GM12878 (cell line): ENCODE measurements at regions of chr4 and their contacts with region 1.

Region 1: DNA sequence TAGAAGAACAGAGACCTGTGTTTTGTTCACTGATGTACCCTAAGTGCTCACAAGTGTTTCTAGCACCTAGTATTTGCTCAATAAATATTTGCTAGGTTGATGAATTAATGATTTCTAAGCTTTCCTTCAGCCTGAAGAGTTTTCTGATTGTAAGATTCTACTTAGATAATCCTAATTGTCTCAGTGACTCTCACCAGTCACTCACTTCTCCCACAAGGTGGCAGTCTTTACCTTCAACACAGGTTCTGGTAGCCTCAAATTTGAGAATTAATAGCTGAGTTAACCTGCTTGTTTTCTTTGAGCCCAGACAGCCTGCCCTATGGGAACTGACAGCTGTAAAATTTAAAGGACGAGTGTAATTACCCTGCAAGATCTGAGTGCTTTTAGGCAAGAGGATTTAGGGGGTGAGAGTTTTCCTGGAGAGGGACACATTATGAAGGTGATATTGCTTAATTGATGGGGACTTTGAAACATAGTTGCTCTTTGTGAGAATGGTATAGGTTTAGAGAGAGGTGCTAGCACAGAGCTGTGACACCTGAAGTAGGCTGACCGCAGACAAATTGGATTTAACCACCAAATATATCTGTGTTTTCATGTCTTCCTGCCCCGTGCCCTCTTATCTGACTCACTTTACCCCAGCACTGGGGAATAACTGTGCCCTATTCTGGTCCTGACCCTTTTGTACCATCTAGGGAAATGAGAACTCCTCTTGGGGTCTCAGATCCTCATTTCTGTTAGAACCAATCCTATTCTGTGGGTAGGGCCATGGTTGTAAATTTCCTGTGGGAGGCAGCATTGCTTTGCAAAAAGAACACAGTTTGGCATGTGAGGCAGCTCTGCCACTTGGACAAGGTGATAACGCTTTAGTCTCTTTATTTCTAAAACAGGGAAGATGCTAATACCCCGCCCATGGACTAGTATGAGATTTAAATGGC is 27.7 kb downstream of the CD38 start:
- DNase-seq: peak; percentile 48
- ATAC-seq: peak; percentile 76
- H3K4me3 ChIP-seq: no peak overlapping the region
- H3K27ac ChIP-seq: no peak overlapping the region
- H3K4me1 ChIP-seq: peaks cover 12% of the 10 kb centered on the region; the same call in 1 of the 2 replicates
- H3K27me3 ChIP-seq: no peaks in the 10 kb centered on the region
- CTCF ChIP-seq: peak; percentile 60 to 75 (median 69)
- EP300 ChIP-seq: peak in 1 of 2 experiments; percentile 40; a peak in 1 of 4 replicates
- POLR2A ChIP-seq: no peak
- RAD21 ChIP-seq: peak; percentile 84

Region 2: GRCh38 chr4:15738877-15739276 is 67.0 kb before region 1 on chr4:
- CTCF ChIA-PET with region 1: interaction called, 31 read pairs
- POLR2A ChIA-PET with region 1: no interaction called
- RAD21 ChIA-PET with region 1: interaction called, 39 read pairs
- SMC1A ChIA-PET with region 1: interaction called, 25 read pairs
- in situ Hi-C with region 1: no loop called
- intact Hi-C with region 1: no loop called
- DNase-seq: no peak
- ATAC-seq: no peak
- H3K4me3 ChIP-seq: no peak overlapping the region
- H3K27ac ChIP-seq: no peak overlapping the region
- H3K4me1 ChIP-seq: no peaks in the 10 kb centered on the region
- H3K27me3 ChIP-seq: no peaks in the 10 kb centered on the region; a peak in 1 of 4 replicates
- CTCF ChIP-seq: no peak
- EP300 ChIP-seq: no peak
- POLR2A ChIP-seq: no peak
- RAD21 ChIP-seq: no peak

Region 3: GRCh38 chr4:15784959-15785634 is 20.8 kb before region 1 on chr4:
- CTCF ChIA-PET with region 1: interaction called, 96 read pairs
- POLR2A ChIA-PET with region 1: interaction called, 4 read pairs
- RAD21 ChIA-PET with region 1: interaction called, 27 read pairs
- SMC1A ChIA-PET with region 1: interaction called, 27 read pairs
- in situ Hi-C with region 1: no loop called
- intact Hi-C with region 1: no loop called
- DNase-seq: no peak
- ATAC-seq: peak; percentile 66
- H3K4me3 ChIP-seq: no peak overlapping the region
- H3K27ac ChIP-seq: no peak overlapping the region
- H3K4me1 ChIP-seq: peaks cover 43% of the 10 kb centered on the region
- H3K27me3 ChIP-seq: no peaks in the 10 kb centered on the region
- CTCF ChIP-seq: no peak
- EP300 ChIP-seq: peak; percentile 62 to 81; a peak in 3 of 4 replicates
- POLR2A ChIP-seq: no peak
- RAD21 ChIP-seq: no peak

Region 4: DNA sequence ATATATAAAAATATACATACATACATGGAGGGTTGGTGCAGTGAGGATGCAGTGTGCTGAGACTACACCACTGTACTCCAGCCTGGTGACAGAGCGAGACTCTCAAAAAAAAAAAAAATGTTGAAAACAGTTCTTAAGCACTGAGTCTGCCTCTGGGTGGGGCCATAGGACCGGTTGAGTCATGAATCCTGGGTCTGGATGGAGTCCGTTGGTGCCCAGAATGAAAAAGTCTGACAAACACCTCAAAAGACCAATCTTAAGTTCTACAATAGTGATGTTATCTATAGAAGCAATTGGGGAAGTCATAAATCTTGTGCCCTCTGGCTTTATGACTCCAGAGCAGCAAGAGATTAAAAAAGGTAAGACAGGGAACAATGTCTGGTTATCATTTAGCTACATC is 62.3 kb after region 1 on chr4:
- CTCF ChIA-PET with region 1: interaction called, 15 read pairs
- POLR2A ChIA-PET with region 1: no interaction called
- RAD21 ChIA-PET with region 1: interaction called, 4 read pairs
- SMC1A ChIA-PET with region 1: interaction called, 5 read pairs
- in situ Hi-C with region 1: no loop called
- intact Hi-C with region 1: no loop called
- DNase-seq: no peak
- ATAC-seq: peak; percentile 39
- H3K4me3 ChIP-seq: no peak overlapping the region
- H3K27ac ChIP-seq: no peak overlapping the region
- H3K4me1 ChIP-seq: no peaks in the 10 kb centered on the region
- H3K27me3 ChIP-seq: no peaks in the 10 kb centered on the region
- CTCF ChIP-seq: no peak
- EP300 ChIP-seq: no peak
- POLR2A ChIP-seq: no peak
- RAD21 ChIP-seq: no peak

Region 5: DNA sequence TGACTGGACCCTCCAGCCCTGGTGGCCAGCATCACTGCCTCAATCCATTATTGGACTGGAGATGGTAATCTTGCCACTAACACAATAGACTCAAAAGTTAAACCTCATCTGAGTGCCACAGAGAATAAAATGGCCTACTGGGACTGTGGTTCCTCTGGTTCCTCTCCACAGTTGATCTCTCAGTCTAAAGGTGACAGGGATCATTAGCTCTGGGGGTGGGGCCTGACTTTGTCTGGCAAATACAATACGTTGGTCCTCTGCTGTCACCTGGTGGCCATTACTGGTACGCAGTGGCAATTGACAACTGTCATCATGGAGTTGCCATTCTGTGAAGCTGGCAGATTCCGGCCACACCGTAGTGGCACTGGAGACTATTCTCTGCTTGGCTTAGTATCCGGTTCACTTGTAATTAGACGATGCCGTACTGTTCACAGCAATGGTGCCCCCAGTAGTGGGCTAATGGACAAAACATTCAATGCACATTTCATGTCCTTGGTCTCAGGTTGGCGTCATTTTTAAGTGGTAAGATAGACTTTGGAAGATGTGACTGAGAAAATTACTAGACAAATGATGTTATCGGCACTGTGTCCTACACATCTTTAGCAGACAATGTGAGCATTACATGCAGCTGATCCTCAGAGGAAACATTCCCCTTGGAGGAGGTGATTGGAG is 150.5 kb after region 1 on chr4:
- CTCF ChIA-PET with region 1: interaction called, 161 read pairs
- POLR2A ChIA-PET with region 1: no interaction called
- RAD21 ChIA-PET with region 1: interaction called, 77 read pairs
- SMC1A ChIA-PET with region 1: interaction called, 80 read pairs
- in situ Hi-C with region 1: loop called (anchors 5 kb)
- intact Hi-C with region 1: loop called (anchors 1 kb)
- DNase-seq: peak; percentile 55
- ATAC-seq: peak; percentile 90
- H3K4me3 ChIP-seq: no peak overlapping the region
- H3K27ac ChIP-seq: no peak overlapping the region
- H3K4me1 ChIP-seq: 0 out of 2 replicates have a peak, but pooled peaks cover 3% of the 10 kb centered on the region
- H3K27me3 ChIP-seq: no peaks in the 10 kb centered on the region
- CTCF ChIP-seq: peak; percentile 86 to 98 (median 92)
- EP300 ChIP-seq: no peak
- POLR2A ChIP-seq: no peak
- RAD21 ChIP-seq: peak; percentile 95

Region 6: DNA sequence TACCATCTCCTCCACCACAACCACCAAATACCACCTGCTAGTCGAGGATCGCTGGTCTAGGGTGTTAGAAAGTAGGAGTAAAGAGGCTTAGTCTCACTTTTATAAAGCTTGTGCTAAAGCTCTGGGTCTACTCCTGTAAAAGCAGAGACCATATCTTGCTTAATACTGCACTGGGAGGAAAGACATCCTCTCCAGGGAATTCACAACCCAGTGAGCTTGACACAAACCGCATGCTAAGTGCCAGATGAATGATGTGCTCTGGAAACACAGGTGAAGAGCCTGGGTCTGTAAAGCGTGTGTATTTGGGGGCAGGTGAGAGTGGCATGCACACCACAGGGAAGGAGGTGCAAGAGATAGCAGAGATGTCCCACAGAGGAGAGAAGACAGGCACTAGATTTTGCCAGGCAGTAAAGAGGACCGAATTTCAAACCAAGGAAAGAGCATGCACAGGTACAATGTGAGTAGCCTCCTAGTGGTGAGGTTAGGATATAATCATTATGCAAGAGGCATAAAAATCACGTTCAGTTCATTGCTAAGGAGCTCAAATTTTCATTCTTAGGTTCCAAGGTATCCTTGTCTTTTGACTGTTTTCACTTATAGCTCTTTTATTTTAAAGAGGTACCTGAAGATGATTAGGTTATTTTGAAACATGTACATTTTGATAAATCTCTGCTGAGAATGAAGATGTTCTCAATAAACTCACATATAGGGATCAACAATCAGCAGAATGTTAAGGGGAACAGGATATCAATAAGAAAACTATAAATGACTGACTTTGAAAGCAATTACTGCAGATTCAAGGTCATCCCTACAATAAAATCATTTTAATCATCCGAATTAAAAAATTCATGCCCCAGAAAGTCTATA is 399.7 kb after region 1 on chr4:
- CTCF ChIA-PET with region 1: interaction called, 3 read pairs
- POLR2A ChIA-PET with region 1: no interaction called
- RAD21 ChIA-PET with region 1: no interaction called
- SMC1A ChIA-PET with region 1: no interaction called
- in situ Hi-C with region 1: loop called (anchors 10 kb)
- intact Hi-C with region 1: no loop called
- DNase-seq: no peak
- ATAC-seq: peak; percentile 94
- H3K4me3 ChIP-seq: no peak overlapping the region
- H3K27ac ChIP-seq: no peak overlapping the region
- H3K4me1 ChIP-seq: peaks cover 6% of the 10 kb centered on the region
- H3K27me3 ChIP-seq: no peaks in the 10 kb centered on the region
- CTCF ChIP-seq: peak; percentile 61 to 79 (median 75)
- EP300 ChIP-seq: no peak
- POLR2A ChIP-seq: no peak
- RAD21 ChIP-seq: peak; percentile 23; the same call in 1 of the 2 replicates